ENCODE measurements at regions of chr3 and their contacts with region 1.

Region 1: GRCh38 chr3:186617038-186617946 is 4.4 kb downstream of the AHSG start:
- H3K4me3 ChIP-seq: peak overlapping the region; percentile 4; the same call in 1 of the 2 replicates
- H3K27ac ChIP-seq: no peak overlapping the region
- H3K4me1 ChIP-seq: no peaks in the 10 kb centered on the region
- CTCF ChIP-seq: peak; percentile 81

Region 2: DNA sequence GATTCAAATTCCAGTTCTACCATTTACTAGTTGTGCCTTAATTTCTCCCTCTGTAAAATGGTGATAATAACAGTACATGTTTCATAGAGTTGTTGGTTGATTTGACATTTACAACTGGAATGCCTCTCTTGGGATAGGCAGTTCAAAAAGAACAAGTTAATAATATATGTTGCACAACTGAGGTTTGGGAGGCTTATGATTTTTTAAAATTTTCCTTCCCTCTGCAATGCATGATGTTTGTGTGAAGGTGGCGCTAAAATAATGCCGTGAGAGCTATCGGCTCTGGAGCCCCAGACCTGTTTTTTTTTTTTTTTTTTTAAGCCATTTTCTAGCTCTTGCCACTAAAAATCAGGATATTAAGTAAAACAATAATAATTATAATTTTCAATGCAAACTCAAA is 28.2 kb before region 1 on chr3:
- CTCF ChIA-PET with region 1: interaction called, 59 read pairs
- POLR2A ChIA-PET with region 1: no interaction called
- H3K4me3 ChIP-seq: no peak overlapping the region
- H3K27ac ChIP-seq: no peak overlapping the region
- H3K4me1 ChIP-seq: no peaks in the 10 kb centered on the region
- CTCF ChIP-seq: no peak

Region 3: DNA sequence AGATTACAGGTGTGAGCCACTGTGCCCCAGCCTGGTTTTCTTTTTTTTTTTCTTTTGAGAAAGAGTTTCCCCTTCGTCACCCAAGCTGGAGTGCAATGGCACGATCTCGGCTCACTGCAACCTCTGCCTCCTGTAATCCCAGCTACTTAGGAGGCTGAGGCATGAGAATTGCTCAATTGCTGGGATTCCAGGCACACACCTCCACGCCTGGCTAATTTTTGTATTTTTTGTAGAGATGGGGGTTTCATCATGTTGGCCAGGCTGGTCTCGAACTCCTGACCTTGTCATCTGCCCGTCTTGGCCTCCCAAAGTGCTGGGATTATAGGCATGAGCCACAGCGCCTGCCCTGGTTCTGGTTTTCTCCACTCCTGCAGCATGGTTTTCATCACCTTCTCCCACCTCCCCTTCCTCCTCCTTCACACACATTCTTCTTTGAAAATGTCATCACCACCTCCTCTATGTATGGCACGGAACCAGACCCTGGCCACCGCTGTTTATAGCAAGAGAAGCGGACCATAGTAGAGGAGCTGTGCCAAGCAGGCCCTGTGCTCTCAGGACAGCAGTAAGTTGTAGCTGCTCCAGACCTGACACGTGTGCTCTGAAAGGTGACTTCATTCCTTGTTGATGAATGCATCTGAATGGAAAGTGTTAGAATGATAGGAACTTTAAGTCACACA is 19.0 kb before region 1 on chr3:
- CTCF ChIA-PET with region 1: interaction called, 20 read pairs
- POLR2A ChIA-PET with region 1: no interaction called
- H3K4me3 ChIP-seq: no peak overlapping the region
- H3K27ac ChIP-seq: no peak overlapping the region
- H3K4me1 ChIP-seq: no peaks in the 10 kb centered on the region
- CTCF ChIP-seq: no peak

Region 4: DNA sequence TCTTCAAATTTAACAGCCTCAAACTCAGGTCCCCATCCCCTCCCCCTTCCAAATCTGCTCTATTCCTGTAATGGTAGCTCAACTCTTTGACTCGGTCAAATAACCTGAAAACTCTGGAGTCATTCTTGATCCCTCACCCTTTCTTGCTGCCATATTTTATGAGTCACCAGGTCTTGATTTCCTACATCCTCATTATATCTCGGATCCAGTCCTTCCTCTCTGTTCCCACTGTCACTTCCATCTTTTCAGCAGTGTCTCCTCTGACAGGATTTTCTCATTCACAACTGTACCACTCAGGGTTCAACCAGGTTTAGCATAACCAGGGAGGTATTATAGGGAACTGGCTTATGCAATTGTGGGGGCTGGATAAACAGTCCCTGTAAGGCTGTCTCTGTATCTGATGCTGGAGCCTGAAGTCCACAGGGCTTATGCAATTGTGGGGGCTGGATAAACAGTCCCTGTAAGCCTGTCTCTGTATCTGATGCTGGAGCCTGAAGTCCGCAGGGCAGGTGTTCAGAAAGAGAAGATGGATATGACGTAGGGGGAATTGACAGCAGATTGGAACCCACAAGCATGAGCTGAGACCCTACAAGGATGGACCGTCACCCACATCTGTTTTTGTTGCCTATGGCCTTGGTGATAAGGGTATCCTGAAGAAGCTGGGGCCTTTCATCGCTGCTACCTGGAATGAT is 13.8 kb after region 1 on chr3:
- CTCF ChIA-PET with region 1: interaction called, 12 read pairs
- POLR2A ChIA-PET with region 1: no interaction called
- H3K4me3 ChIP-seq: no peak overlapping the region
- H3K27ac ChIP-seq: no peak overlapping the region
- H3K4me1 ChIP-seq: no peaks in the 10 kb centered on the region
- CTCF ChIP-seq: no peak

Region 5: DNA sequence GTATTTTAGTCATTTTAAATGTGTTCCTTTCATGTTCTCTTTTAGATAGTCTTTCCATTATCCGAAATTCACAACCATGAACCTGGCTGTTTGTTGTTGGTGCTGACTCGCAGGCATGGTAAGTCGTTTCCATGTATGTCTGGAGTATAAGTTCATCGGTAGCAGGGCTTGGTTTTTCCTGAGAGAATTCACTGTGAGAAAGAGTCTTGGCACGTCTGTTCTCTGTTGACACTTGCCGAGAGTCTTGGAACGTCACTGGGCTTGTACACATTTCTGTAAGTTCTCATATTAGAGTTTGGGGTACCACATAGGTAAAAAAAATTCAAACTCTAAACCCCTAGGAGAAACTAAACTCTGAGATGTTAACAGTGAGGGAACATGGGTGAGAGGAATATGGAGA is 136.7 kb after region 1 on chr3:
- CTCF ChIA-PET with region 1: interaction called, 15 read pairs
- POLR2A ChIA-PET with region 1: no interaction called
- H3K4me3 ChIP-seq: no peak overlapping the region
- H3K27ac ChIP-seq: no peak overlapping the region
- H3K4me1 ChIP-seq: no peaks in the 10 kb centered on the region
- CTCF ChIP-seq: no peak

Region 6: DNA sequence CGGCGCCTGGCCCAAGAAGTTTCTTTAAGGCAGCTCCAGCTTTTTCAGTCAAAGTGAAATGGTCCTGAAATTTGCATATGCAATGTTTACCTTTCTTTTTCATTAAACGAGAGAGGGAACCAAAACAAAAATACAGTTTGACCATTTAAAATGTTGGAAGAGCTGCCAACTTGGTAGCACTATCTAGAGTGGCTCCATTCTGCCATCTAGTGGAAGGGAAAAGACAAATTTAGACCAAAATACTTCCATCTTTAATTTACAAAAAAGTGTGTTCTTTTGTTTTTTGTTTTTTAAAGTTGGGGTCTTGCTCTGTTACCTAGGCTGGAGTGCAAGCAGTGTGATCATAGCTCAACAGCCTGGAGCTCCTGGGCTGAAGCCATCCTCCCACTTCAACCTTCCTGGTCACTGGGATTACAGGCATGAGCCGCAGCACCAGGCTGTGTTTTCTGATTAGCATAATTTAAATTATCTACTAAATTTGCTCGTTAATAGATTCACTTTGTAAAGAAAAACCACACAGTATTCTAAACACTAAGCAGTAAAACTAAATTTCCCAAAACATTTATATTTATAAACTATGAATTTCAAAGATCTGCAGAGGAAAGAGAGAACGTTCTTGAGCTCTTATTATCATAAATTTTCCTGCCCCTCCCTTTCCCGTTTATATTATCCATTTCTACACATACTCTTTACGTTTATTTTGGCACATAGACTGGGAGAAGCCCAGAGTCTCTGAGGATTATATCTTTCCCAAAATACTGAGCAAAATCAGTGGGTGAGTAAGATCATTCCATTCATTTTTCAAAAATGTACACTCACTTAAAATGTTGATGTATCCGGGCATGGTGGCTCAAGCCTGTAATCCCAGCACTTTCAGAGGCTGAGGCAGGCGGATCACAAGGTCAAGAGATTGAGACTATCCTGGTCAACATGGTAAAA is 204.4 kb after region 1 on chr3:
- CTCF ChIA-PET with region 1: interaction called, 11 read pairs
- POLR2A ChIA-PET with region 1: no interaction called
- H3K4me3 ChIP-seq: no peak overlapping the region
- H3K27ac ChIP-seq: no peak overlapping the region
- H3K4me1 ChIP-seq: no peaks in the 10 kb centered on the region
- CTCF ChIP-seq: 0 out of 2 replicates have a peak, but pooled peaks have one; percentile 9